ENCODE measurements at regions of chr2 and their contacts with region 1.

Region 1: DNA sequence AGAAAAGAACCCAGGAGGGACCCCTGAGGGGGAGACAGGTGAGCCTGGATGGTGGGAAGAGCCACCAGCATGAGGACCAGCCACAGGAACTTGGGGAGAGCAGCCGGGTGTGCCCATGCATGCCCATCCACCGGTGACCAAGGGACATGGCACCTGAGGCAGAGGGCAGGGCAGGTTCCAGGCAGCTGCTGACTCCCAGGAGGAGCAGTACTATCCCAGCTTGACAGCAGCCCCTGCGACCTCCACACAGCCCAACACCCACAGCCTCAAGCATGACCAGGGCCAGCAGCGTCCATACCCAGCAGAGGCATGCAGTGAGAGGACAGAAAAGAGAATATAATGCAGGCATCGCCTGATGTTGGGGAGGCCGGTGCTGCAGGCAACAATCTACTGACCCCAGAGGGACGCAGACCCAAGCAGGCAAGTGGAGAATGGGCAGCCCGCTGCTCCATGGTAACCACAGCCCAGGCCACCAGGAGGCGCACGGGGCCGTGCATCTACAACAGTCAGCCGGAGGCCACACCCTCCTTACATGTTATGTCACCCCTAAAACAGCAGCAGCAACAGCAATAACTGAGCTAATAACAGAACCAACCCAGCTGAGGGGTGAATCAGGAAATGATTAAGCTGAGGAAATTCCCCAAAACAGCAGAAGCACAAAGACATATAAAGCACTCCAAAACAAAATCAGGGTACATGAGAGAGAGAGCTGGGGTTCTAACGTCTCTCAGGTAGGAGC is 44.1 kb downstream of the ANKMY1 start:
- DNase-seq: peak; percentile 80
- H3K4me3 ChIP-seq: no peak overlapping the region
- H3K27ac ChIP-seq: no peak overlapping the region
- H3K4me1 ChIP-seq: peaks cover 16% of the 10 kb centered on the region
- H3K27me3 ChIP-seq: no peaks in the 10 kb centered on the region
- CTCF ChIP-seq: peak; percentile 94 to 97

Region 2: DNA sequence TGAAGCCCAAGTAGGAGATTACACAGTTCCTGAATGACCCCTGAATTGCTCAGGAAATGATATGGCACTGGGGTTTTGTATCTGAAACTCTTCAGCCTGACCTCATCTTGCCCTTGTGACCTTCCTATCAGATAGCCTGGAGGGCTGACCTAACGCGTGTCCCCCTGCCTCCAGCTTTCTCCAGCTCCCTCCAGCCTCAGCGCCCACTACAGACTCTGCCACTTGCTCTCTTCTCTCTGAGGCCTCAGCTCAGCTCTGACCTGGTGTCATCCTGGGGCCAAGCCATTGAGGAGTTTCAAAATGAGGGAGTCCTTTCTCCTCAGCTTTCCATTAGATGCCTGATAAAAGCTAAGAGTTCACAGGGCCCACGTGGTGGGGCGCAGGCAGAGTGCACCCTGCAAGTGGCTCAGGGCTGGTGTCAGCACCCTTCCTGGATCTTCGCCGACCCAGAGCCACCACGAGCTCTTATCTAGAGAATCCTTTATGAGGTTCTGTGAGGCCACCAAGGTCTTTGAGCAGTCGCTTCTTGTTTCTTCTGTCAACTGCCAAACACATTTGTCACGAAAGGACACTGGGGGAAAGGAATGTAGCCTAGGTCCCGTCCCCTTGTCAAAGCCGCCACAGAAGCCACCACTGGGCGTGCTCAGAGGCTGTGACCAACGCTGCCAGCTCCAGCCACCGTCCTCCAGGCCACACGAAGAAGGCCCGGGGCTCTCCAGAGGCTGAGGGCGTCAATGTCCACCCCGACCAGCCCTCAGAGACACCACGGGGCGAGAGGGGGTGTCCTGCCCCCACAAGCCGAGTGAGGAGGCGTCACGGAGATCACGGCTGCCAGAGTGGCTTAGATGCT is 209.6 kb before region 1 on chr2:
- CTCF ChIA-PET with region 1: no interaction called
- dilution Hi-C with region 1: no loop called
- in situ Hi-C with region 1: no loop called
- intact Hi-C with region 1: no loop called
- DNase-seq: no peak
- H3K4me3 ChIP-seq: no peak overlapping the region
- H3K27ac ChIP-seq: no peak overlapping the region
- H3K4me1 ChIP-seq: no peaks in the 10 kb centered on the region
- H3K27me3 ChIP-seq: no peaks in the 10 kb centered on the region
- CTCF ChIP-seq: no peak

Region 3: GRCh38 chr2:240424341-240425235 is 89.1 kb before region 1 on chr2:
- CTCF ChIA-PET with region 1: no interaction called
- dilution Hi-C with region 1: loop called (anchors 5 kb)
- in situ Hi-C with region 1: no loop called
- intact Hi-C with region 1: no loop called
- DNase-seq: no peak
- H3K4me3 ChIP-seq: no peak overlapping the region
- H3K27ac ChIP-seq: no peak overlapping the region
- H3K4me1 ChIP-seq: no peaks in the 10 kb centered on the region
- H3K27me3 ChIP-seq: no peaks in the 10 kb centered on the region
- CTCF ChIP-seq: no peak

Region 4: DNA sequence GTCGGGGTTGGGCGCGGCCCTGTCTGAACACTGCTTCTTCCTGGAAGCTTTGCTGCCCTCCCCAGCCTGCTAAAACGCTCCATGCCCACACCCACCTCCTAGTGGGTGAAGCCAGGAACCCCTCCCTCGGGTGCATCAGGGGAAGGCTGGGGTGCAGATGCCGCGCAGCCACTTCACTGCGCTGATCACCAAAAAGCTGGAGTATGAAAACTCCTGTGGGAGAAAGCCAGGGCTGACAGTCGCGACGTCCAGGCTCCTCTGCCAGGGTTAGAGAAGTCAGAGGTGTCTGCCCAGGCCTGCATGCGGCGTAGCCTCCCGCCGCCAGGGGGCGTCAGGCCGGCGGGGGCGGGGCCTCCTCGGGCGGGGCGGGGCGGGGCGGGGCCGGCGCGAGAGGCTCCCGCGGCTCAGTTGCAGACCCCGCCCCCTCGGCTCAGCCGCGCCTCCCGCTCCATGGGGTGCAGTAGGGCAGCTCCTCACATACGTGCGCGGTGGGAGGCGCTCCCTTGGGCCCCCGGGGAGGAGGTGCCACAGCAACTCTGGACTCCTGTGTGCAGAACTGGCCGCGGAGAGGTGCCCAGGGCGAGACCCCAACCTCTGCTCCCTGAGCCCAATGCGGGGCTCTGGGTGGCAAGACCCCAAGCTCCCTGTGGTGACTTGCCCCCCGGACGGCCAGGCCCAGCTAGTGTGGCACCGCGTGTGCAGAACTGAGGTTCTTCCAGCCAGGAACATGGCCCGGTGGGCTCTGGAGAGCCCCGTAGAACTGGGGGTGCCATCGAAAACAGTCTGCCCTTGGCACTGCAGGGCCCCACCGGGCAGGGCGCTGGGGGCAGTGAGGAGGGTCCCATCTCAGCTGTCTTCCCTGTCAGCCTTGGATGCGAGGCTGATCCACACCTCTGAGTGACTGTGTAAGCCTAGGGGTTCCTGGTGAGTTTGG is 52.8 kb after region 1 on chr2:
- CTCF ChIA-PET with region 1: interaction called, 8 read pairs
- dilution Hi-C with region 1: no loop called
- in situ Hi-C with region 1: no loop called
- intact Hi-C with region 1: loop called (anchors 1 kb)
- DNase-seq: peak; percentile 73
- H3K4me3 ChIP-seq: peak overlapping the region in 2 of 3 experiments; percentile 65 to 67
- H3K27ac ChIP-seq: peak overlapping the region; percentile 61
- H3K4me1 ChIP-seq: peaks cover 46% of the 10 kb centered on the region
- H3K27me3 ChIP-seq: no peaks in the 10 kb centered on the region
- CTCF ChIP-seq: peak; percentile 68 to 73

Region 5: GRCh38 chr2:240704651-240705050 is 190.9 kb after region 1 on chr2:
- CTCF ChIA-PET with region 1: interaction called, 3 read pairs
- dilution Hi-C with region 1: no loop called
- in situ Hi-C with region 1: loop called in 1 of 2 experiments (anchors 10 kb)
- intact Hi-C with region 1: loop called (anchors 2 kb)
- DNase-seq: no peak
- H3K4me3 ChIP-seq: no peak overlapping the region
- H3K27ac ChIP-seq: no peak overlapping the region
- H3K4me1 ChIP-seq: no peaks in the 10 kb centered on the region
- H3K27me3 ChIP-seq: peaks cover 28% of the 10 kb centered on the region
- CTCF ChIP-seq: no peak

Region 6: GRCh38 chr2:240840435-240841080 is 326.8 kb after region 1 on chr2:
- CTCF ChIA-PET with region 1: interaction called, 13 read pairs
- dilution Hi-C with region 1: no loop called
- in situ Hi-C with region 1: loop called (anchors 25 kb)
- intact Hi-C with region 1: loop called (anchors 1 kb)
- DNase-seq: peak; percentile 40
- H3K4me3 ChIP-seq: no peak overlapping the region
- H3K27ac ChIP-seq: no peak overlapping the region
- H3K4me1 ChIP-seq: no peaks in the 10 kb centered on the region
- H3K27me3 ChIP-seq: peaks cover 7% of the 10 kb centered on the region
- CTCF ChIP-seq: peak; percentile 58 to 76

Measured in mammary epithelial cell (primary cell).